AG04450 (cell line): ENCODE measurements at regions of chr15 and their contacts with region 1.

Region 1: DNA sequence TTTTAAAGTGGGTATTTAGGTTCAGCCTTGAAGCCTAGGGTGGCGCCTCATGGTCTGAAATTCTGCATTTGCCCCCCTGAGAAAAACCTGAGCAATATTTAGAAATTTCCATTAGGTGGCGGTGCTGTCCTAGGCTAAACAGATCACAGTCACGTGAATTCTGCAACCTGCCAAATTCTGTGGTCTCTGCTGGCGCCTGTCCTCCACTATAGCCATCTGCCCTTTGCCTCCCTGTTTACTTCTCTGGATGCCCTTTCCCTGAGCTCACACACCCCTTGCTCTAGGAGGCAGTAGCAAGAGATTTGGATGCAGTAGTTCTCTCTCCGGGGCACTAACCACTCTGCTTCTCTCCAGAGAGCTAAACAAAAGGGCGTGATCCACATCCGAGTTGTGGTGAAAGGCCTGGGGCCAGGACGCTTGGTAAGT is 9.1 kb downstream of the MRPS11 start:
- DNase-seq: peak; percentile 23
- H3K4me3 ChIP-seq: no peak overlapping the region
- H3K27ac ChIP-seq: no peak overlapping the region
- H3K27me3 ChIP-seq: no peaks in the 10 kb centered on the region
- CTCF ChIP-seq: peak; percentile 66

Region 2: DNA sequence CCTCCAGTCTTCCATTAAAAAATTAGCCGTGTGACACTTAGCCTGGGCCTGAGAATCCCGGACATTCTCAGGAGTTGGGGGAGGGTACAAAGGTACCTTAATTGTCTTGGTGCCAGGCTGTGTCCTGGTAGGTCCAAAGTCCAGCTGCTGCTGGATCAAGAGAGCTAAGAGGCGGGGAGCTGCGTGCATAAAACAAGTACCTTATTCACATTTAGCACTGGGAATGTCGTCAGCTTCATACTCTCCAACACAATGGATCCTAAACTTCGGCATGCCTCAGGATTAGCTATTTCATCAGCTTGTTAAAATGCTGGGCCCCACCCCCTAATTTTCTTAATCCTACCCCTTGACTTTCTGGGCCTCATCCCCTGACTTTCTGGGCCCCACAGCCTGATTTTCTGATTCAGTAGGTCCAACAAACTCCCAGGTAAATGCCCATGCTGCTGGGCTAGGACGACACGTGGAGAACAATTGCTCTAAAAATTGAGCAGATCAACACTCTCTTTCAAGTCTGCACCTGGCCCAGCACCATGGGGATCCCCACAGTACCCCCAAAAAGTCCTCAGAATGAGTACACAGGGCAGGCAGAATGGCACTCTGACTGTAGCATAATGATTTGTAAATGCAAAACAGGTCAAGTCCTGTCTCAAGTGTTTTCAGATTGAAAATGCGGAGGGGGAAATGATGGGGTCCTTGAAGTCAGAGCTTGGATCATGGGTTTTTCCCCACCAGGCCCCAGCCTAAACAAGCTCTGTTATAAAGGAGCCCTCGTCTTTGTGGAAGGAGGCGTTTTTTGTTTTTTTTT is 138.9 kb after region 1 on chr15:
- CTCF ChIA-PET with region 1: interaction called, 16 read pairs
- POLR2A ChIA-PET with region 1: no interaction called
- DNase-seq: no peak
- H3K4me3 ChIP-seq: no peak overlapping the region
- H3K27ac ChIP-seq: no peak overlapping the region
- H3K27me3 ChIP-seq: no peaks in the 10 kb centered on the region
- CTCF ChIP-seq: no peak